ENCODE measurements at regions of chr9 and their contacts with region 1.

Region 1: GRCh38 chr9:123234853-123235252 is 33.5 kb downstream of the STRBP start:
- DNase-seq: peak; percentile 51
- ATAC-seq: peak; percentile 84
- H3K4me3 ChIP-seq: peak overlapping the region; percentile 28; the same call in 1 of the 2 replicates
- H3K27ac ChIP-seq: peak overlapping the region; percentile 80
- H3K4me1 ChIP-seq: peaks cover 34% of the 10 kb centered on the region
- H3K27me3 ChIP-seq: no peaks in the 10 kb centered on the region
- CTCF ChIP-seq: no peak
- EP300 ChIP-seq: peak in 1 of 2 experiments; percentile 18; a peak in 1 of 4 replicates
- POLR2A ChIP-seq: no peak
- RAD21 ChIP-seq: no peak

Region 2: GRCh38 chr9:123081824-123082223 is 153.0 kb before region 1 on chr9:
- CTCF ChIA-PET with region 1: interaction called, 16 read pairs
- POLR2A ChIA-PET with region 1: no interaction called
- RAD21 ChIA-PET with region 1: no interaction called
- SMC1A ChIA-PET with region 1: interaction called, 3 read pairs
- in situ Hi-C with region 1: no loop called
- intact Hi-C with region 1: no loop called
- DNase-seq: peak; percentile 13
- ATAC-seq: peak; percentile 78
- H3K4me3 ChIP-seq: no peak overlapping the region
- H3K27ac ChIP-seq: no peak overlapping the region; the same call in 1 of the 2 replicates
- H3K4me1 ChIP-seq: no peaks in the 10 kb centered on the region
- H3K27me3 ChIP-seq: no peaks in the 10 kb centered on the region
- CTCF ChIP-seq: peak; percentile 43 to 75 (median 69); a peak in 5 of 6 replicates
- EP300 ChIP-seq: no peak
- POLR2A ChIP-seq: no peak
- RAD21 ChIP-seq: peak; percentile 77

Region 3: GRCh38 chr9:123251741-123252140 is 16.9 kb after region 1 on chr9:
- CTCF ChIA-PET with region 1: interaction called, 6 read pairs
- POLR2A ChIA-PET with region 1: interaction called, 8 read pairs
- RAD21 ChIA-PET with region 1: interaction called, 4 read pairs
- SMC1A ChIA-PET with region 1: interaction called, 46 read pairs
- in situ Hi-C with region 1: no loop called
- intact Hi-C with region 1: no loop called
- DNase-seq: no peak
- ATAC-seq: no peak
- H3K4me3 ChIP-seq: no peak overlapping the region
- H3K27ac ChIP-seq: no peak overlapping the region
- H3K4me1 ChIP-seq: no peaks in the 10 kb centered on the region
- H3K27me3 ChIP-seq: no peaks in the 10 kb centered on the region
- CTCF ChIP-seq: no peak
- EP300 ChIP-seq: no peak
- POLR2A ChIP-seq: no peak
- RAD21 ChIP-seq: no peak

Region 4: GRCh38 chr9:123261006-123261677 is 26.3 kb after region 1 on chr9:
- CTCF ChIA-PET with region 1: interaction called, 11 read pairs
- POLR2A ChIA-PET with region 1: interaction called, 8 read pairs
- RAD21 ChIA-PET with region 1: interaction called, 9 read pairs
- SMC1A ChIA-PET with region 1: interaction called, 9 read pairs
- in situ Hi-C with region 1: no loop called
- intact Hi-C with region 1: no loop called
- DNase-seq: no peak
- ATAC-seq: no peak
- H3K4me3 ChIP-seq: no peak overlapping the region
- H3K27ac ChIP-seq: no peak overlapping the region
- H3K4me1 ChIP-seq: peaks cover 24% of the 10 kb centered on the region
- H3K27me3 ChIP-seq: no peaks in the 10 kb centered on the region
- CTCF ChIP-seq: no peak
- EP300 ChIP-seq: no peak
- POLR2A ChIP-seq: no peak
- RAD21 ChIP-seq: no peak

Region 5: GRCh38 chr9:123268240-123268949 is 33.5 kb after region 1 on chr9 and contains the start of gene STRBP:
- CTCF ChIA-PET with region 1: interaction called, 4 read pairs
- POLR2A ChIA-PET with region 1: interaction called, 7 read pairs
- RAD21 ChIA-PET with region 1: interaction called, 5 read pairs
- SMC1A ChIA-PET with region 1: interaction called, 11 read pairs
- in situ Hi-C with region 1: no loop called
- intact Hi-C with region 1: no loop called
- DNase-seq: peak; percentile 50
- ATAC-seq: peak; percentile 91
- H3K4me3 ChIP-seq: peak within 1 kb of the TSS; percentile 83
- H3K27ac ChIP-seq: peak within 1 kb of the TSS; percentile 61
- H3K4me1 ChIP-seq: peaks cover 17% of the 10 kb centered on the region
- H3K27me3 ChIP-seq: no peaks in the 10 kb centered on the region
- CTCF ChIP-seq: peak in 1 of 3 experiments; percentile 18; a peak in 1 of 6 replicates
- EP300 ChIP-seq: no peak
- POLR2A ChIP-seq: peak; percentile 69
- RAD21 ChIP-seq: no peak
- polyA plus RNA-seq, gene STRBP: 31.0 to 50.1 TPM

Region 6: DNA sequence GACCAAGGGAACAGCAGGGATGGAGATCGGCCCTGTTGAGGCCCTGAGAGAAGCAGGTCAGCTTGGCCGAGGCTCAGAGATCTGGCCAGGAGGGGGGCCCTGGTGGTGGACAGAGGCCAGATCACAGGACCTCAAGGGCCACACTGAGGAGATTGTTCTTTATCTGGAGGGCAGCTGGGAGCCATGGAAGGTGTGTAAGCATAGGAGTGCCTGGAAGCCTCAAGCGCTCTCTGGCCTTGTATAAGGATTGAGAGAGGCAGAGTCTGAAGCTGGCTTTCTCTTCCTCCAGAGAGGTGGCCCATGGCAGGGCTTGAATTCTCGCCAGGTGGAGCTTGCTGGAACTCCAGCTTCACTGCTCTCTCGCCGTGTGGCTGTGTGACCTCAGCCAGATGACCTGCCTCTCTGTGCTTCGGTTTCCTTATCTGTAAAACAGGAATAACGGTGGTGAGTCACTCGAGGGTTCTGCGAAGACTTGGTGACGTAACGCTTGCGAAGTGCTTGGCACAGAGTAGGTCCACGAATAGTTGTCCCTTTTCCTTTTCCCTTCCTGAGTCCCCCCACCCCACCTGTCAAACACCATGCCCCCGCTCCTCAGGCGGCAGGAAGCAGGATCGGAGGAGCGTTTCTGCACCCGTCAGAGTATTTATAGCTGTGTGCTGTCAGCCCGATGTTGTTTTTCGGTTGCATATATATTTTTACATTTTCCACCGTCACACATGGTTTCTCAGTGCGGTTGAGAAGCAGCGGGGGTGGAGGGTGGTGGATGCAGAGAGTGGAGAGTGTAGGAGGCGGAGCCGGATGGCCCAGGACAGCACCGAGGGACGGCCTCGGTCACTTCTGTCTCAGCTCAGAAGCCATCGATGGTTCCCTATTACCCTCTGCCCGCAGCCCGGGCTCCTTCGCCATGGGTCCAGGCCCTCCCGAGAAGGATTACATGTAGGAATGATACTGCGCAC is 104.1 kb after region 1 on chr9:
- CTCF ChIA-PET with region 1: interaction called, 5 read pairs
- POLR2A ChIA-PET with region 1: interaction called, 10 read pairs
- RAD21 ChIA-PET with region 1: interaction called, 9 read pairs
- SMC1A ChIA-PET with region 1: interaction called, 17 read pairs
- in situ Hi-C with region 1: loop called (anchors 5 kb)
- intact Hi-C with region 1: loop called (anchors 1 kb)
- DNase-seq: peak; percentile 94
- ATAC-seq: peak; percentile 80
- H3K4me3 ChIP-seq: peak overlapping the region; percentile 60
- H3K27ac ChIP-seq: peak overlapping the region; percentile 99
- H3K4me1 ChIP-seq: peaks cover 90% of the 10 kb centered on the region
- H3K27me3 ChIP-seq: no peaks in the 10 kb centered on the region
- CTCF ChIP-seq: no peak
- EP300 ChIP-seq: peak in 1 of 2 experiments; percentile 88; a peak in 3 of 4 replicates
- POLR2A ChIP-seq: peak; percentile 80
- RAD21 ChIP-seq: 0 out of 2 replicates have a peak, but pooled peaks have one; percentile 20

Region 7: DNA sequence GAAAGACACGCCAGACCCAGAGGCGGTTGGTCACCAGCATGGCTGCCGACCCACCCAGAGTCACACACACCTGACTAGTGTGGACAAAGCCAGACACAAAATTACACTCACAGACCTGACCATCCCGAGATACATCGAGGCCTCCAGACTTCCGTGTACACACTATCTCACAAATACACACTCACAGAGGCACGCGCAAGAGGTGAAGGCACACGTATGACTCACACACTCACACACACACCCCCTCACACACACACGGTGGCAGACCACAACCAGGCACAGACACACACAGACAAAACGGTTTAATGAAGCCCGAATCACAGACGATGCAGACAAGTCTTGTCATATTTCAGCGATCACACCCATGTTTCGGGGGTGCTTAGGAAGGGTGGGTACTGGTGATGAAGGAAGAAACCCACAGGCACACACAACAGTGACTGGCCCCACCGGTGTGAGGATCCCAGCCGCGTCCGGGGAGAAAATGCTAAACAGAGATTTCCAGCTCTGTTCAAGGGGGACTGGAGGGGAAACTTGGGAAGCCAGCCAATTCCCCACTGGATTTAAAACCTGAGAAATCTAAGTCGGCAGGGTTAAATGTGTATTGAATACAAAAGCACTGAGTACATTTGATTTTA is 172.5 kb after region 1 on chr9:
- CTCF ChIA-PET with region 1: no interaction called
- POLR2A ChIA-PET with region 1: no interaction called
- RAD21 ChIA-PET with region 1: no interaction called
- SMC1A ChIA-PET with region 1: no interaction called
- in situ Hi-C with region 1: no loop called
- intact Hi-C with region 1: no loop called
- DNase-seq: no peak
- ATAC-seq: no peak
- H3K4me3 ChIP-seq: no peak overlapping the region
- H3K27ac ChIP-seq: no peak overlapping the region
- H3K4me1 ChIP-seq: no peaks in the 10 kb centered on the region
- H3K27me3 ChIP-seq: no peaks in the 10 kb centered on the region
- CTCF ChIP-seq: no peak
- EP300 ChIP-seq: no peak
- POLR2A ChIP-seq: no peak
- RAD21 ChIP-seq: no peak

Region 8: DNA sequence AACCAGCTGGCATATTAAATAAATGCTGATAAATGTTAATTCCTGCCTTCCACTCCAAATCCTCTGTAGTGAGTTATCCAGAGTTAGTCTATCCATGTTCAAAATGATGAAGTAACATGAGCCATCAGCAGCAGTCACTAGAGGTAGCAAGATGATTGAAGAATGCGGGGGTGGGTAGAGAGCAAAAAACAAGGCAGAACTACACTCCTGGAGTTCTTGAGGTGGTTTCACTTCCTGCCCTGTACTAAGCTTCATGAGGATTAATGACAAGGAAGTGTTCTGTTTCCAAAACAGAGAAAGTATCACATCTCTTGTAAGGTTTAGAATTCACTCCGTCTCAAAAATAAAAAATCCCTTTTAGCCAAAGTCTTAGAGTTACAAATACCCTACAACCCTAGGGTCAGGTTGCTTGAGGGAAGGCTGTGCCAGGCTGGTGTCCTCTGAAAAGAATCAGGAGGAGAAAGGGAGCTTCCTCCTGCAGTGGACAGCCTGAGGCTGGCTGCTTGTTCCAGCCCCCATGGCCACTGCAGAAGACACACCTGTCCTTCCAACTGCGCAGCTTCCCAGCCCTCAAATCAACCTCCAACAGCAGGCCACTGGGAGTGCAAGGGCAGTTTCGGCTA is 514.8 kb after region 1 on chr9:
- CTCF ChIA-PET with region 1: no interaction called
- POLR2A ChIA-PET with region 1: no interaction called
- RAD21 ChIA-PET with region 1: no interaction called
- SMC1A ChIA-PET with region 1: no interaction called
- in situ Hi-C with region 1: no loop called
- intact Hi-C with region 1: no loop called
- DNase-seq: peak; percentile 40
- ATAC-seq: peak; percentile 90
- H3K4me3 ChIP-seq: no peak overlapping the region
- H3K27ac ChIP-seq: peak overlapping the region; percentile 60
- H3K4me1 ChIP-seq: peaks cover 21% of the 10 kb centered on the region
- H3K27me3 ChIP-seq: no peaks in the 10 kb centered on the region
- CTCF ChIP-seq: peak in 1 of 3 experiments; percentile 26; a peak in 2 of 6 replicates
- EP300 ChIP-seq: 0 out of 4 replicates have a peak, but pooled peaks of 1 of the 2 experiments have one; percentile 29
- POLR2A ChIP-seq: no peak
- RAD21 ChIP-seq: peak; percentile 52

Region 9: GRCh38 chr9:125126019-125126746 is 1891.3 kb after region 1 on chr9:
- CTCF ChIA-PET with region 1: no interaction called
- POLR2A ChIA-PET with region 1: no interaction called
- RAD21 ChIA-PET with region 1: no interaction called
- SMC1A ChIA-PET with region 1: no interaction called
- in situ Hi-C with region 1: no loop called
- intact Hi-C with region 1: no loop called
- DNase-seq: peak; percentile 50
- ATAC-seq: peak; percentile 100
- H3K4me3 ChIP-seq: no peak overlapping the region
- H3K27ac ChIP-seq: 0 out of 2 replicates have a peak overlapping the region, but pooled peaks have one; percentile 6
- H3K4me1 ChIP-seq: 0 out of 2 replicates have a peak, but pooled peaks cover 2% of the 10 kb centered on the region
- H3K27me3 ChIP-seq: no peaks in the 10 kb centered on the region
- CTCF ChIP-seq: no peak
- EP300 ChIP-seq: 0 out of 4 replicates have a peak, but pooled peaks of 1 of the 2 experiments have one; percentile 10
- POLR2A ChIP-seq: peak; percentile 55
- RAD21 ChIP-seq: no peak